ENCODE measurements at regions of chr12 and their contacts with region 1.

Region 1: DNA sequence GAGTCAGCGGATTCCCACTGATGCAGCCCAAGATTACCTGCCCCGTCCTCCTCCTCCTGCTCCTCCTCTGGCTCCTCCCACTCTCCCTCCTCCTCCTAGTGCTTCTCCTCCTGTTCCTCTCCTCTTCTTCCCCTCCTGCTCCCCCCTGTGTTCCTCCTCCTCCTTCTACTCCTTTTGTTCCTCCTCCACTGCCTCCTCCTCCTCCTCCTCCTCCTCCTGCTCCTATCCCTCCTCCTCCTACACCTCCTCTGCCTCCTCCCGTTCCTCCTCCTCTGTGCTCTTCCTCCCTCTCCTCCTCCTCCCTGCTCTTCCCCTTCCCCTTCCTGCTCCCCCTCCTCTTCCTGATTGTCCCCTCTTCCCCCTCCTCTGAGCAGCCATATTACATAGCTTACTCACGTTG is 141.3 kb downstream of the CACNA1C start:
- DNase-seq: no peak
- ATAC-seq: no peak
- H3K4me3 ChIP-seq: no peak overlapping the region
- H3K27ac ChIP-seq: peak overlapping the region in 11 of 12 donors; percentile 6 to 68 (median 55)
- H3K4me1 ChIP-seq: peaks cover 0 to 60% (median 41%) of the 10 kb centered on the region in 12 donors
- H3K27me3 ChIP-seq: no peaks in the 10 kb centered on the region
- CTCF ChIP-seq: no peak
- POLR2A ChIP-seq: no peak

Region 2: GRCh38 chr12:2256915-2257314 is 62.9 kb after region 1 on chr12:
- intact Hi-C with region 1: loop called in 1 of 10 experiments (anchors 5 kb)
- DNase-seq: peak in 1 of 5 donors; percentile 59
- ATAC-seq: peak; percentile 18 to 65 (median 53)
- H3K4me3 ChIP-seq: no peak overlapping the region
- H3K27ac ChIP-seq: peak overlapping the region in 5 of 12 donors; percentile 15 to 40 (median 31)
- H3K4me1 ChIP-seq: peaks cover 5 to 72% (median 42%) of the 10 kb centered on the region in 12 donors
- H3K27me3 ChIP-seq: no peaks in the 10 kb centered on the region
- CTCF ChIP-seq: no peak
- POLR2A ChIP-seq: no peak